Caco-2 (cell line): ENCODE measurements at regions of chr2 and their contacts with region 1.

Region 1: GRCh38 chr2:72887754-72888437 is 688 bp downstream of the SPR start:
- DNase-seq: peak; percentile 93 to 95
- H3K4me3 ChIP-seq: peak overlapping the region; percentile 80
- H3K4me3 Mint-ChIP-seq: peak overlapping the region; percentile 85
- H3K27ac Mint-ChIP-seq: peak overlapping the region; percentile 49
- H3K4me1 ChIP-seq: peaks cover 21% of the 10 kb centered on the region
- H3K4me1 Mint-ChIP-seq: peaks cover 7% of the 10 kb centered on the region
- H3K27me3 ChIP-seq: no peaks in the 10 kb centered on the region
- H3K27me3 Mint-ChIP-seq: no peaks in the 10 kb centered on the region
- CTCF ChIP-seq: peak; percentile 81 to 99

Region 2: GRCh38 chr2:72561621-72562318 is 326.1 kb before region 1 on chr2:
- CTCF ChIA-PET with region 1: no interaction called
- POLR2A ChIA-PET with region 1: no interaction called
- intact Hi-C with region 1: no loop called
- DNase-seq: no peak
- H3K4me3 ChIP-seq: no peak overlapping the region
- H3K4me3 Mint-ChIP-seq: no peak overlapping the region
- H3K27ac Mint-ChIP-seq: peak overlapping the region; percentile 1
- H3K4me1 ChIP-seq: peaks cover 20% of the 10 kb centered on the region
- H3K4me1 Mint-ChIP-seq: peaks cover 16% of the 10 kb centered on the region
- H3K27me3 ChIP-seq: no peaks in the 10 kb centered on the region
- H3K27me3 Mint-ChIP-seq: no peaks in the 10 kb centered on the region
- CTCF ChIP-seq: no peak

Region 3: DNA sequence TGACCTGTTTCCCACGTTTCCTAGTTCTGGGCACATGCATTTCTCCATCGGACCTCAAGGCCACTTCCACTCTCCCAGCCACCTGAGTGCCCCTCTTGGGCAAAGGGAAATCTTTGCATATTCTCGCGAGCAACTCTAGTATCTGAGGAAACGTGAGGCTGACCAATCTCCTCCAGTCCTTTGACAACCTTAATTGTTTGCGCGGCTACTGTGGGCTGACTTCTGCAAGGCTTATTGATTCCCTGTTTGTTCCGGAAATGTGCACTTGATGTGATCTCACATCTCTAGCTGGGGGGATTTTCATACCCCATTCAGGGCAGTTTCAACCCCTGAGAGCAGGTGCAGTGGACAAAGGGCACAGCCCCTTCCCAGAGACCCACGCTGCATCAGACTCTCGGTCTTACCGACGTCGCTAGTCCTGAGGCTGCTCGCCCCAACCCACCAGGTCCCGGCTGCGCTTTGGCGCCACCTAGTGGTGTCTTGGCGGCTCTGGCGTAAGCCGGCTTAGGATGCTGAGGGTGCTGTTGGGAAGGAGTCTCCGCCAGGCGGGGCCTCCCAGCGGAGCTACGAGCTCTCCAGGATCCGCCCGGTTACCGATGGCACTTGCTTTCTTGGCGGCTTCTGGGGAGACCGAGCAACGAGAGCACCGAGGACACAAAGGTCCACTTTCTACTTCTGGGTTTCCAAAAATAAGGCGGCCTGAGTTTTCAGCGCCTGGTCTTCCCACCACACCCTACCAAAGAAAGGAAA is 25.5 kb before region 1 on chr2:
- CTCF ChIA-PET with region 1: interaction called, 18 read pairs
- POLR2A ChIA-PET with region 1: no interaction called
- intact Hi-C with region 1: loop called (anchors 1 kb)
- DNase-seq: peak; percentile 93 to 97
- H3K4me3 ChIP-seq: peak overlapping the region; percentile 36
- H3K4me3 Mint-ChIP-seq: peak overlapping the region; percentile 73
- H3K27ac Mint-ChIP-seq: no peak overlapping the region
- H3K4me1 ChIP-seq: peaks cover 8% of the 10 kb centered on the region
- H3K4me1 Mint-ChIP-seq: peaks cover 6% of the 10 kb centered on the region
- H3K27me3 ChIP-seq: no peaks in the 10 kb centered on the region
- H3K27me3 Mint-ChIP-seq: no peaks in the 10 kb centered on the region
- CTCF ChIP-seq: peak; percentile 95 to 99

Region 4: DNA sequence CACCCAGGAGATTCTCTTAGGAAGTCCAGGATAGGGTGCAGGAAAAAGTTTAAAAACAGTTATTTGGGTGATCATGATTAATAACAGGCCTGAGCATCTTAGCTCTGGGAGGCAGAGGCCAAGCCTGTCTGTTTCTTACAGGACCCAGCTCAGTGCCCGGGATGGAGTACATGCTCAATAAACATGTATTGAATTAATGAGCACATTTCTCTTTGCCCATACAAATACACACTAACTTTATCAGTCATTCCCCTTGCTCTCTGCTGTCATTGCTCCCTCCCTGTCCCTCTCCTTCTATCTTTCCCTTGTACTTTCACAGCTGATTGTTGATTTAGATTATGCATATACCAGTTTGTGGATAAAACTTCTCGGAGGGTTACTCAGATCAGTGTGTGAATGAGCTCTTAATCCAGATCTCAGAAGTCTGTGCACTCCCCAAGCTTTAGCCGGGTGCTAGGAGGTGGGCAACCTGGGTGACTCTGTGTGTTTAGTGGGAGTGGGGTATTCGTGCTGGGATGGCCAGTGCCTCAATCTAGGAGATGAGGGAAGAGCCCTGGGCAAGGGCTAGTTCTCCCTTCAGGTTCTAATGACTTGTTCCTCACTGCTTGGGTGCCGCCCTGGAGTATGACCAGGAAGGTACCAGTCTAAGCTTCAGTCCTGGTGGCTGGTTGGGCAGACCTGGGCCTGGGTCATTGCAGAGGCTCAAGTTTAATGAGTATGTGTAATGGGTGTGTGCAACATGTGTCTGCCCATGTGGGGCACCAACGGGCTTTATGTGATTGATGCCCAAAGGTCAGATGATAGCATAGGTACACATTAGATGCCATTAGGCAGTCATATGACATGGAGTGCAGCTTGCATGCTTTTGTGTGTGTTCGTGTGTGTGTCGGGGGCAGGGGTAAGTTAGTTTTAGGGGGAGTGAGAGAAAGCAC is 40.0 kb after region 1 on chr2:
- CTCF ChIA-PET with region 1: interaction called, 62 read pairs
- POLR2A ChIA-PET with region 1: no interaction called
- intact Hi-C with region 1: no loop called
- DNase-seq: no peak
- H3K4me3 ChIP-seq: no peak overlapping the region
- H3K4me3 Mint-ChIP-seq: no peak overlapping the region
- H3K27ac Mint-ChIP-seq: no peak overlapping the region
- H3K4me1 ChIP-seq: no peaks in the 10 kb centered on the region
- H3K4me1 Mint-ChIP-seq: no peaks in the 10 kb centered on the region
- H3K27me3 ChIP-seq: peaks cover 1% of the 10 kb centered on the region; the same call in 1 of the 2 replicates
- H3K27me3 Mint-ChIP-seq: peaks cover 5% of the 10 kb centered on the region
- CTCF ChIP-seq: no peak

Region 5: GRCh38 chr2:72952110-72952823 is 64.4 kb after region 1 on chr2:
- CTCF ChIA-PET with region 1: interaction called, 14 read pairs
- POLR2A ChIA-PET with region 1: no interaction called
- intact Hi-C with region 1: loop called (anchors 1 kb)
- DNase-seq: no peak
- H3K4me3 ChIP-seq: no peak overlapping the region
- H3K4me3 Mint-ChIP-seq: no peak overlapping the region
- H3K27ac Mint-ChIP-seq: peak overlapping the region; percentile 3
- H3K4me1 ChIP-seq: peaks cover 3% of the 10 kb centered on the region; the same call in 1 of the 2 replicates
- H3K4me1 Mint-ChIP-seq: no peaks in the 10 kb centered on the region
- H3K27me3 ChIP-seq: no peaks in the 10 kb centered on the region
- H3K27me3 Mint-ChIP-seq: no peaks in the 10 kb centered on the region
- CTCF ChIP-seq: peak in 1 of 2 experiments; percentile 11

Region 6: DNA sequence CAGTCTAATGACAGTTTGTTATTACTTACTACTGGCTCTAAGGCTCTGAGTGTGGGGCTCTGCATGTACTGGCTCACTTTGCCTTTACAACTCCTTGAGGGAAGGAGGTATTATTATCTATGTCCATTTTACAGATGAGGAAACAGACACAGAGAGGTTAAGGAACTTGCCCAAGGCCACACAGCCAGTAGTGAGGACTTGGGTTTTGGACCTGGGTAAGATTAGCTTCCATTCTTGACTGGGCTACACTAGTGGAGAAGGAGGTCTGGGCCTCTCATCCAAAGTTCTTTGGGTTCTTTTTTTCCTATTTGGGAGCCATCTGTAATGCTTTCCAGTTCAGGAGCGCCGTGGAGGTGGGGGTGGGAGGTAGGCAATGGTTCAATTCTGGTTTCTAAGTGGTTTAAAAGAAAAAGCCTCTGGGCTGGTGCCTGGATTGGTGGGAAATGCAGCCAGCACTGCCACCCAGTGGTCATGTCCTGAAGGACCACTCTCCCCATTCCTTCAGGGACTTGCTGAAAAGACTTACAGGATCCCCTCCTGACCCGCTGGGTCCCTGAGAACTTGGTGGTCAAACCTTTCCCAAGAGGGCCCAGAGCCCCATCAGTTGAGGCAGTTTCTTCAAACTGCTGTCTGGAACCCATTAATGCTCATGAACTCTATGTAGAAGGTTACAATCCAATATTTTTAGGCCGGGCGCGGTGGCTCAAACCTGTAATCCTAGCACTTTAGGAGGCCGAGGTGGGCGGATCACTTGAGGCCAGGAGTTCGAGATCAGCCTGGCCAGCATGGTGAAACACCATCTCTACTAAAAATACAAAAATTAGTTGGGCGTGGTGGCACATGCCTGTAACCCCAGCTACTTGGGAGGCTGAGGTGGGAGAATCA is 275.8 kb after region 1 on chr2:
- CTCF ChIA-PET with region 1: no interaction called
- POLR2A ChIA-PET with region 1: no interaction called
- intact Hi-C with region 1: loop called (anchors 2 kb)
- DNase-seq: peak; percentile 80 to 86
- H3K4me3 ChIP-seq: no peak overlapping the region
- H3K4me3 Mint-ChIP-seq: no peak overlapping the region
- H3K27ac Mint-ChIP-seq: no peak overlapping the region
- H3K4me1 ChIP-seq: no peaks in the 10 kb centered on the region
- H3K4me1 Mint-ChIP-seq: no peaks in the 10 kb centered on the region
- H3K27me3 ChIP-seq: no peaks in the 10 kb centered on the region
- H3K27me3 Mint-ChIP-seq: peaks cover 8% of the 10 kb centered on the region
- CTCF ChIP-seq: peak; percentile 86 to 92

Region 7: GRCh38 chr2:73212448-73213176 is 324.7 kb after region 1 on chr2:
- CTCF ChIA-PET with region 1: interaction called, 3 read pairs
- POLR2A ChIA-PET with region 1: interaction called, 9 read pairs
- intact Hi-C with region 1: loop called (anchors 2 kb)
- DNase-seq: peak; percentile 70 to 87
- H3K4me3 ChIP-seq: no peak overlapping the region
- H3K4me3 Mint-ChIP-seq: peak overlapping the region; percentile 89
- H3K27ac Mint-ChIP-seq: no peak overlapping the region
- H3K4me1 ChIP-seq: peaks cover 20% of the 10 kb centered on the region
- H3K4me1 Mint-ChIP-seq: peaks cover 9% of the 10 kb centered on the region
- H3K27me3 ChIP-seq: no peaks in the 10 kb centered on the region
- H3K27me3 Mint-ChIP-seq: no peaks in the 10 kb centered on the region
- CTCF ChIP-seq: peak; percentile 95